ENCODE measurements at regions of chr1 and their contacts with region 1.

Region 1: GRCh38 chr1:181189691-181190363 is 101.3 kb downstream of the IER5 start:
- DNase-seq: peak; percentile 43 to 87 (median 66)
- H3K4me3 ChIP-seq: peak overlapping the region in 58 of 59 donors; percentile 17 to 66 (median 49)
- H3K27ac ChIP-seq: peak overlapping the region in 5 of 59 donors; percentile 11 to 58 (median 25)
- H3K27me3 ChIP-seq: peaks cover 0 to 3% (median 0%) of the 10 kb centered on the region in 45 donors
- CTCF ChIP-seq: peak; percentile 52 to 99 (median 93)

Region 2: DNA sequence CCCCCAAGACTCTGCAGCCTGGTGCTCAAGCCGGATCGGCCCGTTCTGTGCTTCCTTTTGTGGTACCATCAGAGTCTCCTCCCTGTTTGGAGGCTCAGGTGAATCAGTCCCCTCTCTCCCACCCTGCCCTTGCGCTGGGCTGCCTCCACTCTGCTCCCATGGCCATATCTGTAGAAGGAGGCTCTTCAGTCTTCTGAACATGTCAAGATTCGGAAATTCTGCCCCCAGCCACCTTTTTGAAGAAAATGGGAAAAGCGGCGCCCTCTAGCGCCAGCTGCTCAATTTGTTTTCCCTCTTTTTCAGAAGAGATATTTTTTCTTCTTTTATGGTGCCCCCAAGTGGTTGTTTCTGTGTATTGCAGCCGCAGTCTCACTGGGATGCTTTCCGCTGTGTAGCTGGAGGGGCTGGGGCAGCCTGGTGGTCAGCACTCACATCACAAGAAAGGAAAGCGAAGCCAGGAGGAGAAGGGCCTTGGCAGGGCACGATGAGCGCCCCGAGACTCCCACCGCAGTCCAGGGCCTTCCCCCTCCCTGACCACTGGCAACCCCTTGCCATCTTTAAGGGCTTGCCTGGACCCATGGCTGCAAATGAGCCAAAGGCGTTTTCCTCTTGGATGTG is 235.1 kb after region 1 on chr1:
- intact Hi-C with region 1: loop called (anchors 1 kb)
- DNase-seq: peak; percentile 60 to 85 (median 75)
- H3K4me3 ChIP-seq: peak overlapping the region in 20 of 59 donors; percentile 11 to 46 (median 32)
- H3K27ac ChIP-seq: peak overlapping the region in 1 of 59 donors; percentile 31
- H3K27me3 ChIP-seq: peaks cover 0 to 6% (median 0%) of the 10 kb centered on the region in 45 donors
- CTCF ChIP-seq: peak; percentile 97 to 100 (median 99)

Region 3: DNA sequence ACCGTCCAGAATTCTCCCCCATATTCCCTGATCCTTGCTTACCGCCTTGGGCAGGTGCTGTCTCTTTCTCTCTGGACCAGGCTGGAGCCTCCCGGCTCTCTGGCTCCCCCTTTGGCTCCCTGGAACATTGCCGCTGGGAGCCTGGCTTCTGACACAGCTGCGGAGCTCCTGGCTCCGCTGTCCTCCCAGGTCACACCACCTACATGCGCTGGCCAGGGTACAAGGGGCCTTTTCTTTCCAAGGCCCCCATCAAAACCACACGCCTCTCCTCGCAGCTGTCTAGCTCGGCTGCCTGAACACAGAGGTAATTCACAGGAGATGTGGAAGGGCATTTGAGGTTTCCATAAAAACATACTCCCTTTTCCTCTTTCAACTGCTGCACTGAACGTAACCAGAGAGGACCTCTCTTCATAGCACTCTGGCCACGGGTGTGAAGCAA is 879.2 kb after region 1 on chr1:
- intact Hi-C with region 1: loop called in 1 of 2 experiments (anchors 10 kb)
- DNase-seq: peak in 6 of 10 donors; percentile 33 to 71 (median 60)
- H3K4me3 ChIP-seq: peak overlapping the region in 11 of 59 donors; percentile 6 to 34 (median 23)
- H3K27ac ChIP-seq: no peak overlapping the region
- H3K27me3 ChIP-seq: no peaks in the 10 kb centered on the region
- CTCF ChIP-seq: peak in 53 of 56 donors; percentile 20 to 74 (median 63)